ENCODE measurements at regions of chr2 and their contacts with region 1.

Region 1: DNA sequence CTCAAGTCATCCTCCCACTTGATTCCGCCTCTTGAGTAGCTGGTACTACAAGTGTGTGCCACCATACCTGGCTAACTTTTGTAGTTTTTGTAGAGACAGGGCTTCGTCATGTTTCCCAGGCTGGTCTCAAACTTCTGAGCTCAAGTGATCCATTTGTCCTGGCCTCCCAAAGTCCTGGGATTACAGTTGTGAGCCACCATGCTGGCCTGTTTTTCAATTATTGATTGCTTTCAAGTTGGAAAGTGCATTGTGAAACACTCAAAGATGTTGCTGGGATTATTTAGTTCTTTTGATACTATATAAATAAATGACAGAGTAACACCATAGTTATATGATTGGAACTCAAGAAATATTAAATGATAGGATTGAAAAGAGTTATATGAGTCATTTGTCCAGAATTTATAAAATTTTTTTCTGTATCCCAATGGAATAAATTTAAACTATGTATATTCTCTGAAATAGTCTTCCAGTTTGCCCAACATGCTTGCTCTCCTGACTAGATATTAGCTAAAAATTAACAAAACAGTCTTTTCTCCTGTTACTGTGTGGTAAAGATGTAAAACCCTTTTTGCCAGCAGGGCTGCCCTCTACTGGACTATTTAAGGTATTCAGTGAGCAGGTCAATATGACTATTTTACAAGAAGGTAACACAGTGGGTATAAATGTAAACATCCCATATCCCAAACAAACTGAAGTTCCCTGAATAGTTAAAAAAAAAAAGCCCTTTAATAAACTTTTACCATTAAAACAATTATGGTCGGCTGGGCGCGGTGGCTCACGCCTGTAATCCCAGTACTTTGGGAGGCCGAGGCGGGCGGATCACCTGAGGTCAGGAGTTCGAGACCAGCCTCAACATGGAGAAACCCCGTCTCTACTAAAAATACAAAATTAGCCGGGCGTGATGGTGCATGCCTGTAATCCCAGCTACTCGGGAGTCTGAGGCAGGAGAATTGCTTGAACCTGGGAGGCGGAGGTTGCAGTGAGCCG is 42.7 kb downstream of the ACSL3 start:
- DNase-seq: no peak
- H3K4me3 ChIP-seq: no peak overlapping the region
- CTCF ChIP-seq: peak; percentile 50

Region 2: DNA sequence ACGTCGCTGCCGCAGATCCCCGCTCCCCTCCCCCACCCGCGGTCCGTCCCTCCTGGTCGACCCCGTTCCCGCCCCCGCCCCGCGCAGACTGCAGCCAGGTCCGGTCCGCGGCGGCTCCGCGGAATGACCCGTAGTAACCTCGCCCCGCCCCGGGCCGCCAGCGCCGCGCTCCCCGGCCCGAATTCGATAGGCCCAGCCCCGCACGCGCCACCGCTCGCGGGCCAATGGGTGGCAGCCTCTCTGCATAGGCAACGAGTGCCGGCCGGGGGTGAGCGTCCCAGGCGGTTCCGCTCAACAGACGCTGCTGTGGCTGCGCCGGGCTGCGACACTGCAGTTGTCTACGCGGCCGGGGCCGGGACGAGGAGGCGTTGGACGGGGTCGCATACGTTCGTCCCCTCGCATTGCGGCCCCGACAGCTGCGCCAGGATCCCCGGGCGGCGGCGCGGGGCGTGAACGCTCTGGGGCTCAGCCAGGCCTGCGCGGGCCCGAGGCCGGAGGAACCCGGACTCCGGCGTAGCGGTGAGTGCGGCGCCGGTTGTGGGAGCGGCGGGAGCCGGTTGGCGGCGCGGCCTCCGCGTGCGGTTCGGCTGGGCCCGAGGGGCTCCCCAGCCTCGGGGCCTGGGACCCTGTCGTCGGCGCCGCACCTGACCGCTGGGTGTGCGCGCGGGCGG is 42.7 kb before region 1 on chr2 and contains the start of gene ACSL3:
- CTCF ChIA-PET with region 1: interaction called, 20 read pairs
- POLR2A ChIA-PET with region 1: interaction called, 5 read pairs
- DNase-seq: no peak
- H3K4me3 ChIP-seq: peak within 1 kb of the TSS; percentile 77
- CTCF ChIP-seq: no peak

Region 3: DNA sequence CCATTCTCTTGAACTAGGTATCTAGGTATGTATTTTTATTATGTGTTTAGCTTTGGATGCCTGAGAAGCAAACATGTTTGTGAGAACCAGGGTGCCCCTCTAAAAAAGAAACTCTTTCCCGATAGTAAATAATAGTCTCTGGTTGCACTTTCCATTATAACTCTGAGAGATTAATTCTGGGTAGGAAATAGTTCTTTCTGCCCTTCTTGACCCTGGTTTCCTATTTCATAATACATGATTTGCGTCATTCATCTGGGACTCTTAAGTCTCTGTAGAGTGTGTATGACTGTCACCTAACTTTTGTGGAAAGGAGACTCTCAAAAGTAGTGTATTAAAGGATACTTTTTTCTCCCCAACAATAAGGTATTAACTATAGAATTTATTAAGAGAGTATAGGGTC is 11.2 kb before region 1 on chr2:
- CTCF ChIA-PET with region 1: interaction called, 48 read pairs
- POLR2A ChIA-PET with region 1: no interaction called
- DNase-seq: no peak
- H3K4me3 ChIP-seq: no peak overlapping the region
- CTCF ChIP-seq: no peak

Measured in AG04449 (cell line).